ENCODE measurements at regions of chr7 and their contacts with region 1.

Region 1: GRCh38 chr7:66740302-66740979 is at the start of gene RABGEF1:
- DNase-seq: peak; percentile 95
- ATAC-seq: peak; percentile 78
- H3K4me3 ChIP-seq: peak within 1 kb of the TSS; percentile 100
- H3K27ac ChIP-seq: peak within 1 kb of the TSS; percentile 74
- H3K4me1 ChIP-seq: peaks cover 18% of the 10 kb centered on the region
- H3K27me3 ChIP-seq: no peaks in the 10 kb centered on the region
- CTCF ChIP-seq: no peak
- total RNA-seq, gene RABGEF1: 19.8 and 20.8 TPM in 2 replicates

Region 2: GRCh38 chr7:66602161-66602560 is 138.3 kb before region 1 on chr7:
- CTCF ChIA-PET with region 1: no interaction called
- POLR2A ChIA-PET with region 1: interaction called, 15 read pairs
- intact Hi-C with region 1: no loop called
- DNase-seq: no peak
- ATAC-seq: no peak
- H3K4me3 ChIP-seq: no peak overlapping the region
- H3K27ac ChIP-seq: no peak overlapping the region
- H3K4me1 ChIP-seq: no peaks in the 10 kb centered on the region
- H3K27me3 ChIP-seq: no peaks in the 10 kb centered on the region
- CTCF ChIP-seq: no peak

Region 3: GRCh38 chr7:66681491-66682349 is 58.7 kb before region 1 on chr7:
- CTCF ChIA-PET with region 1: no interaction called
- POLR2A ChIA-PET with region 1: interaction called, 3 read pairs
- intact Hi-C with region 1: loop called (anchors 2 kb)
- DNase-seq: peak; percentile 96
- ATAC-seq: peak; percentile 88
- H3K4me3 ChIP-seq: peak overlapping the region; percentile 94
- H3K27ac ChIP-seq: peak overlapping the region; percentile 61
- H3K4me1 ChIP-seq: peaks cover 21% of the 10 kb centered on the region
- H3K27me3 ChIP-seq: no peaks in the 10 kb centered on the region
- CTCF ChIP-seq: no peak

Region 4: DNA sequence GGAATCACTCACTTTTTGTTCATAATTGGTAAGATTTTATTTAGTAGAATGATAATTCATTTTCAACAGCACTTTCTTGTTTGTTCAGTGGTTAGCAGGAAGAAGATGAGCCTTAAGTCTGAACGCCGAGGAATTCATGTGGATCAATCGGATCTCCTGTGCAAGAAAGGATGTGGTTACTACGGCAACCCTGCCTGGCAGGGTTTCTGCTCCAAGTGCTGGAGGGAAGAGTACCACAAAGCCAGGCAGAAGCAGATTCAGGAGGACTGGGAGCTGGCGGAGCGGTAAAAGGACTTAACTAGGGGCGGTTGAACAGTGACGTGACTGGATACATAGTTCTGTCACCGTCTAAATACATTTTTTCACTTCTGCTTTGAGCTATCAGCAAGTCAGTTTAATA is 31.4 kb after region 1 on chr7:
- CTCF ChIA-PET with region 1: no interaction called
- POLR2A ChIA-PET with region 1: interaction called, 3 read pairs
- intact Hi-C with region 1: loop called (anchors 2 kb)
- DNase-seq: no peak
- ATAC-seq: no peak
- H3K4me3 ChIP-seq: no peak overlapping the region
- H3K27ac ChIP-seq: no peak overlapping the region
- H3K4me1 ChIP-seq: peaks cover 10% of the 10 kb centered on the region
- H3K27me3 ChIP-seq: no peaks in the 10 kb centered on the region
- CTCF ChIP-seq: no peak

Region 5: DNA sequence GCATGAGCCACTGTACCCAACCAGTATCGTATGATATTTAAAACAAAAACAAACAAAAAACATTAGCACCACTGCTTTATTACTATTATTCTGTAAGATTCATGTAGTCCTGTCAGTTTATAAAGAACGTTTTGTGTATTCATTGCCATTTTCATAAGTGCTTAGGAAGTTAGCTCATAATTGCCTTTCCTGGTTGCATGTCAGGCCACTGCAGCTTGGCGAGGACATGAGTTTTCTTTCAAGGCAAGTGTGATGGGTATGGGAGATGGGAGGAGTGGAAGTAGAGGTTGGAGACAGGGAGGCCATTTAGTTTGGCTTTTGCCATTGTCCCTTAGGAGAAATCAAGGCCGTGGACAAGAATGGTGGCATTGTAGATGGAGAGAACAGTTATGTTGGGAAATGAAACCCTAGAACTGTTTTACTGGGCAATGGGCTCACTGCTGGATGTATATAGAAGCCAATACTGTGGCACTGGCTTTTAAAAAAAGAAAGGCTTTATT is 305.1 kb after region 1 on chr7:
- CTCF ChIA-PET with region 1: no interaction called
- POLR2A ChIA-PET with region 1: interaction called, 16 read pairs
- intact Hi-C with region 1: no loop called
- DNase-seq: no peak
- ATAC-seq: no peak
- H3K4me3 ChIP-seq: no peak overlapping the region
- H3K27ac ChIP-seq: no peak overlapping the region
- H3K4me1 ChIP-seq: peaks cover 11% of the 10 kb centered on the region
- H3K27me3 ChIP-seq: no peaks in the 10 kb centered on the region
- CTCF ChIP-seq: no peak